Activated naive CD4-positive, alpha-beta T cell treated with anti-CD3 and anti-CD28 coated beads for 36 hours (primary cell): ENCODE measurements at regions of chr17 and their contacts with region 1.

Region 1: DNA sequence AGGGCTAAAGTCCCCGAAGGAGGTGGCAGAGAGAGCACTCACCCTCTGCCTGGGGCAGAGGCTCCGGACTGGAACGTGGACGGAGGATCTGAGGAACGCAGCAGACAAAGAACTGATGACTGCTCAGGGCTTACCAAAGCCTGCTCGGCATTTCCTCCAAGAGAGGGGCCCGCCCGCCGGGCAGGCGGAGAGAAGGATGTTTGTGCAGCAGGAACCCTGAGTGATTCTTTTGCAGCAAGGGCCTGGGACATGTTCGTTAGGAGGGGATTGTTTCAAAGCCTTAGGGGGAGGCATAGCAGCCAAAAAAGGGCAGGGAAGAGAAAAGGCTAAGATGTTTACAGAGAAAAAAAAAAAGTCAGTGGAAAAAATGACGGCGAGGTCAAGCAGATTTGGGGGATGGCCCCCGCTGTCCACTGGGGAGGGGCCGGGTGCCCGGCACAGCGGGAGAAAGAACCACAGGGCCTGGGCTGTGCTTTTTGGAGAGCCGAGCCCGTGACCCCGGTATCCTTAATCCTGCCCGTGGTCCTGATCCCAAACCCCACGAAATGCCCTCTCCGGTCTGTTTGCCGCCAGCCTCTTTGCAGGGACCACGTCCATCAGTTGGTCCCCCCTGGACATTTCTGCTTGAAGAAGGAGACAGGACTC is 129.3 kb downstream of the NTN1 start:
- DNase-seq: no peak
- H3K4me3 Mint-ChIP-seq: no peak overlapping the region
- H3K27ac Mint-ChIP-seq: no peak overlapping the region
- H3K4me1 Mint-ChIP-seq: no peaks in the 10 kb centered on the region
- H3K27me3 Mint-ChIP-seq: peaks cover 2% of the 10 kb centered on the region

Region 2: GRCh38 chr17:9217151-9218056 is 66.8 kb after region 1 on chr17:
- CTCF ChIA-PET with region 1: no interaction called
- intact Hi-C with region 1: loop called (anchors 10 kb)
- DNase-seq: no peak
- H3K4me3 Mint-ChIP-seq: no peak overlapping the region
- H3K27ac Mint-ChIP-seq: no peak overlapping the region
- H3K4me1 Mint-ChIP-seq: no peaks in the 10 kb centered on the region
- H3K27me3 Mint-ChIP-seq: no peaks in the 10 kb centered on the region

Region 3: DNA sequence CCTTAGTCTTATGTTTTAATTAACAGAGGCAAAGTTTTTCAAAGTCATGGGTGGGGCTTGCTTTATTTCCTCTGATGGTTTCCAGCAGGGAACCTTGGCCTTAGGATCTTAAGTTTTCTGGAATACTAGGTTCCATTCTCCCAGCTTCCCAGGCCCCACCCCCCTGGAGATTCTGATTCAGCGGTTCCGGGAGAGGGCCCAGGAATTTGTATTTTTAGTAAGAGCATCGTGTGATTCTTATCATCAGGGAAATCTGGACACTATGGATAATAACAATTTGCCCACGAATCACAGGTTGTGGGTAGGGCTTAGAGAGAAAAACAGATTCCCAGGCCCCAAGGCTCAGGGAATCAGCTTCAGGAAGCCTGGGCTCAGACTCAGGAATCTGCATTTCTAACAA is 134.3 kb after region 1 on chr17:
- CTCF ChIA-PET with region 1: no interaction called
- intact Hi-C with region 1: no loop called
- DNase-seq: no peak
- H3K4me3 Mint-ChIP-seq: no peak overlapping the region
- H3K27ac Mint-ChIP-seq: no peak overlapping the region
- H3K4me1 Mint-ChIP-seq: peaks cover 20% of the 10 kb centered on the region
- H3K27me3 Mint-ChIP-seq: no peaks in the 10 kb centered on the region